ENCODE measurements at regions of chr4 and their contacts with region 1.

Region 1: DNA sequence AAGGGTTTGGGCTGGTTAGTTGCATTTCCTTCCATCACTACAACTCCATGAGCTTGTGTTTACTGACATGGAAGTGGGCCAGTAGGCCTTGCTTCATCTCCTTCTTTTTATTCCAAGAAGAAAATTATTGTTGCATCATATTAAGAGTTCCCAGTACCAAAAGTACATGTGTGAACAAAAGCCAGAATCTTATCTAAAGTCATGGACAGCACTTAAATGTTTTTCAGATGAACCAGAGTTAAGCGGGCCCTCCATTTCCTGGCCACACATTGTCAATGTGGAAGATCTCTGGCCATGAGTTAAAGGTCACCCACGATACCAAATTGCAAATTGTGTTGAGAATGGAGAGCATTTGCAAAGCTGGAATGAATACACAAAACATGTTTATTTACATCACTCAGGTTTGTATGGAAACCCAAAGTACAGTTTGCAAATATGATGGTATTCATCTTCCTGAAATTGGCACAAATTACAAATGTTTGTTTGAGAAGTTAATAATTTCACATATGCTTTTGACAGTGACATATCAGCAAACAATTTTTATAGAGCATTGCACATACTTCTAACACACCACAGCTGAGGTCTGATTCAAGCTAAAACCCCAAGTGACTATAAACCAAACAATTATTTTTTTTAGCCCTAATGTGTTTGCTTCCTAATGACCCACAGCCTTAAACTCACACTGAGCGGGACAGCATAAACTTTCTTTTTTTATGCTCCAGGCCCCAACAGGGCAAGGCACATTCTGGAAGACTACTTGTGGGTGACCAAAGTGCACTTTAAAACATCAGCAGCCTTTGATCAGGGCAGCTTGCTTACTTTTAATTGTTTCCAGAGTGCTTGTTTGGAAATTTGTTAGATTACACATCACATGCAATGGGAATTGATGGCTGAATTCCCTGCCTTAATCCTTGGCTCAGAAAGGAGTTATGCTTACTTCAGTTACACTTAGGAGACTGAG is 502.9 kb upstream of the SLIT2 start:
- DNase-seq: no peak
- ATAC-seq: no peak
- H3K4me3 Mint-ChIP-seq: no peak overlapping the region
- H3K27ac Mint-ChIP-seq: no peak overlapping the region
- H3K4me1 Mint-ChIP-seq: no peaks in the 10 kb centered on the region
- H3K27me3 Mint-ChIP-seq: no peaks in the 10 kb centered on the region
- CTCF ChIP-seq: no peak

Region 2: GRCh38 chr4:19473569-19473968 is 275.2 kb before region 1 on chr4:
- CTCF ChIA-PET with region 1: no interaction called
- POLR2A ChIA-PET with region 1: no interaction called
- DNase-seq: no peak
- ATAC-seq: no peak
- H3K4me3 Mint-ChIP-seq: no peak overlapping the region
- H3K27ac Mint-ChIP-seq: no peak overlapping the region
- H3K4me1 Mint-ChIP-seq: peaks cover 5% of the 10 kb centered on the region; the same call in 1 of the 2 replicates
- H3K27me3 Mint-ChIP-seq: no peaks in the 10 kb centered on the region
- CTCF ChIP-seq: no peak

Region 3: GRCh38 chr4:19592391-19592790 is 156.4 kb before region 1 on chr4:
- CTCF ChIA-PET with region 1: no interaction called
- POLR2A ChIA-PET with region 1: no interaction called
- DNase-seq: no peak
- ATAC-seq: no peak
- H3K4me3 Mint-ChIP-seq: no peak overlapping the region
- H3K27ac Mint-ChIP-seq: no peak overlapping the region
- H3K4me1 Mint-ChIP-seq: no peaks in the 10 kb centered on the region
- H3K27me3 Mint-ChIP-seq: no peaks in the 10 kb centered on the region
- CTCF ChIP-seq: no peak

Region 4: GRCh38 chr4:19631814-19632213 is 117.0 kb before region 1 on chr4:
- CTCF ChIA-PET with region 1: no interaction called
- POLR2A ChIA-PET with region 1: no interaction called
- DNase-seq: no peak
- ATAC-seq: no peak
- H3K4me3 Mint-ChIP-seq: no peak overlapping the region
- H3K27ac Mint-ChIP-seq: no peak overlapping the region
- H3K4me1 Mint-ChIP-seq: no peaks in the 10 kb centered on the region
- H3K27me3 Mint-ChIP-seq: no peaks in the 10 kb centered on the region
- CTCF ChIP-seq: no peak

Region 5: DNA sequence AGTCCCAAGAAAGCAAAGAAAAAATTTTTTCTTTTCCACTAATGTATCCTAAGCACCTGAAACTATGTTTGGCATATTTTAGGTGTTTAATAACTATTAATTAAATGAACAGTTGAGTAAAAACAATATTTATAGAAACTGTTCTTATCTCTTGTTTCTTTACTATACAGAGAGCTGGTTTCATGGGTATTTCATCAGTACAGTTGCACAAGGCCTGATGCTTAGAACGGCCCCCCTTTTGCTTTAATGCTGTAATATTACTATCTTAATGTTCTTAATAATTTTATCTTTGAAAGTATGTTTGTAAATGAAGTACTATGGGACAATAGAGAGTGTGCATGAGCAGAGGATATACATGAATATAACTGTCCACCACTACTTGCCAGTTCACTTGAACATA is 23.8 kb after region 1 on chr4:
- CTCF ChIA-PET with region 1: no interaction called
- POLR2A ChIA-PET with region 1: interaction called, 11 read pairs
- DNase-seq: no peak
- ATAC-seq: no peak
- H3K4me3 Mint-ChIP-seq: no peak overlapping the region
- H3K27ac Mint-ChIP-seq: no peak overlapping the region
- H3K4me1 Mint-ChIP-seq: no peaks in the 10 kb centered on the region
- H3K27me3 Mint-ChIP-seq: no peaks in the 10 kb centered on the region
- CTCF ChIP-seq: no peak

Measured in WTC11 (cell line).